ENCODE measurements at regions of chr11 and their contacts with region 1.

Region 1: DNA sequence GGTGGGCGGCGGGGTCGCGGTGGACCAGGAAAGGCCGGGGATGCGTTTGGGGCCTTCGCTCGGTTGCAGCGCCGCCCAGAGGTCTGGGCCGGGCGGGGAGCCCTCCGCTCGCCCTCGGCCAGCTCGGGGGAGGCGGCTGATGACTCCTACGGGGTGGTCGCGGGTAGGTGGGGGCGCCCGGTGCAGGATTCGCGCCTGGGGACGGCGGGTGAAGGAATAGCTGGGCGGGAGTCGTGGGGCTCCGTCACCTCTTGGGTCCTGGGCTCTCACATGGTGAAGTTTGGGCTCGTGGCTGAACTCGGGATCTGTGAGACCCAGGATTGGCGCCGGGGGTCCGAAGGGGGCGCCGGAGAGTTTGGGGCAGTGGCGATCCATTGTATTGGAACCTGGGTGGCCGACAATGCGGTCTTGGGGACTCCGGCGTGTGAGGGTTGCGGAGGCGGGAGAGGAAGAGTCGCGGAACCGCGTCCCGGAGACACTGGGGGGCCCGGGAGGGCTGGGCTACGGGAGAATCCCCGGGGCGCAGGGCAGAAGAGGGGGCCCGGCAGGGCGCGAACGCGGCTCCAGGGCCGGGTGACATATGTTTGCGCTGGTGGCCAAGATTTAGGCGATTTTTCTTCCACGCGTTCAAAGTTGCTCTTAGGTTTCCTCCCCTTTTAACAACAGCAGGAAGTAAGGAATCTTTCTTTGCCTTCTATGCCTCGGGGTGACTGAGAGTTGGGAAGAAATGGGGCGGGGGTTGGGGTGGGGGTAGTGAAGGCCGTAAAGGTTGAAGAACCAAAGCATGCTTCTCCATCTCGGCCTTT is 935 bp downstream of the QSER1 start:
- DNase-seq: no peak
- H3K4me3 ChIP-seq: peak overlapping the region; percentile 71 to 99 (median 96)
- H3K27ac ChIP-seq: peak overlapping the region; percentile 85 to 97 (median 96)
- H3K4me1 ChIP-seq: peaks cover 10 to 32% (median 21%) of the 10 kb centered on the region in 4 donors
- H3K27me3 ChIP-seq: no peaks in the 10 kb centered on the region
- CTCF ChIP-seq: peak; percentile 46 to 57 (median 47)
- EP300 ChIP-seq: no peak
- POLR2A ChIP-seq: no peak

Region 2: DNA sequence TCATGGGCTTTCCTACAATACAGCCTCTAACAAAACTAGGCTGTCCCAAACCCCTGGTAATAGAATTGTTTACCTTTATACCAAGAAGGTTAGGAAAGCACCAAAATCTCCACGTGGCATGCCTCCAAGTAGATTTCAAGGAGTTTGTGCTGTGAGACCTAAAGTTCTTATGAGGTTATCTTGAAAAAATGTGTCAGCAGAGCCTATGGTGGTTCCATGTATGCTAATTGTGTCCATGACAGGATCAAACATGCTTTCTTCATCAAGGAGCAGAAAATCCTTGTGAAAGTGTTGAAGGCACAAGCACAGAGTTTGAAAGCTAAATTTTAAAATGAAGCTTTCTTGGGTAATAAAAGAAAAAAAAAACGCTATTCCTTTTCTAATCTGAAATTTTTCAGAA is 135.3 kb before region 1 on chr11:
- intact Hi-C with region 1: no loop called
- DNase-seq: no peak
- H3K4me3 ChIP-seq: no peak overlapping the region
- H3K27ac ChIP-seq: no peak overlapping the region
- H3K4me1 ChIP-seq: no peaks in the 10 kb centered on the region
- H3K27me3 ChIP-seq: no peaks in the 10 kb centered on the region
- CTCF ChIP-seq: no peak
- EP300 ChIP-seq: no peak
- POLR2A ChIP-seq: no peak

Region 3: GRCh38 chr11:32939046-32939445 is 45.5 kb after region 1 on chr11:
- intact Hi-C with region 1: no loop called
- DNase-seq: no peak
- H3K4me3 ChIP-seq: no peak overlapping the region
- H3K27ac ChIP-seq: no peak overlapping the region
- H3K4me1 ChIP-seq: peaks cover 0 to 3% (median 0%) of the 10 kb centered on the region in 4 donors
- H3K27me3 ChIP-seq: no peaks in the 10 kb centered on the region
- CTCF ChIP-seq: no peak
- EP300 ChIP-seq: no peak
- POLR2A ChIP-seq: no peak

Region 4: GRCh38 chr11:33039274-33040032 is 145.9 kb after region 1 on chr11 and contains the start of gene TCP11L1:
- intact Hi-C with region 1: loop called (anchors 5 kb)
- DNase-seq: peak; percentile 97
- H3K4me3 ChIP-seq: peak within 1 kb of the TSS; percentile 91 to 100 (median 98)
- H3K27ac ChIP-seq: peak within 1 kb of the TSS; percentile 98 to 99 (median 99)
- H3K4me1 ChIP-seq: peaks cover 6 to 24% (median 19%) of the 10 kb centered on the region in 4 donors
- H3K27me3 ChIP-seq: no peaks in the 10 kb centered on the region
- CTCF ChIP-seq: no peak
- EP300 ChIP-seq: no peak
- POLR2A ChIP-seq: no peak
- total RNA-seq, gene TCP11L1: 39.6 to 66.0 (median 58.3) TPM

Measured in esophagus muscularis mucosa (tissue), 4 donors.